Naive thymus-derived CD8-positive, alpha-beta T cell (primary cell): ENCODE measurements at regions of chr5 and their contacts with region 1.

Region 1: GRCh38 chr5:160119142-160119904 is at the start of gene PWWP2A:
- DNase-seq: peak; percentile 91 to 99 (median 98)
- ATAC-seq: peak; percentile 92 to 94
- H3K4me3 Mint-ChIP-seq: peak within 1 kb of the TSS; percentile 86 to 98 (median 96)
- H3K27ac Mint-ChIP-seq: peak within 1 kb of the TSS; percentile 79 to 97 (median 94)
- H3K4me1 Mint-ChIP-seq: peaks cover 5 to 26% (median 14%) of the 10 kb centered on the region in 4 donors
- H3K27me3 Mint-ChIP-seq: peaks cover 0 to 4% (median 3%) of the 10 kb centered on the region in 5 donors
- polyA plus RNA-seq, gene PWWP2A: 21.0 to 30.5 (median 29.8) TPM

Region 2: DNA sequence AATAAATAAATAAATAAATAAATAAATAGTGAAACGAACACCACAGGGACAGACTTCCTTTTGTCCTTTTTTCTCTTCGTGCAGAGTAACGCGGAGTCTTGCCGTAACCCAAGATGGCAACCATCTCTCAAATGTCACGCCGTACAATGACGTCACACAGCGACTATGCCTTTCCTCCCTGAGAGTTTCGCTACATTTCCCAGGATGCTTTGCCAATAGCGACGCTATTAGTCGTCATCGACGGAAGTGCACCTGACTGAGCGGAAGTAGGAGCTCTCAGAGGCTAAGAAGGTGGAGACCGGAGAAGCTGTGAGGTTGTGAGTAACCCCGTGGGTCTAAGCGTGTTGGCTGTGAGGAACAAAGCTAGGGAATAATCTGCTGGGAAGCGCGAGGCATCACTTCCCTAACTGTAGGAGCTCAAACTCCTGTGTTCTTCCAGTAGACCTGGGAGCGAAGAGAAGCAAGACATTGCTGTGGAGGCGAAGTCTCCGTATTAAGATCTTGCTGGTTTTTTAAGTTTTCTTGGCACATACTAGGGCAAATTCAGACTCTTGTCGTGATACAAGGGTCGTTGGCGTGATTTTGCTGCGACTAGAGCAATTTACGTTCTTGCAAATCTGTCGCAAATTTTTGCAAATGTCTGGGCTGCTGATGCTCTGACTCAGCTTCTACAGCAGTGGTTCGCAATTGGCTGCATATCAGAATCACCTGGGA is 110.3 kb before region 1 on chr5 and contains the start of gene TTC1:
- POLR2A ChIA-PET with region 1: interaction called, 11 read pairs
- DNase-seq: peak; percentile 69 to 97 (median 92)
- ATAC-seq: peak; percentile 98
- H3K4me3 Mint-ChIP-seq: peak within 1 kb of the TSS; percentile 91 to 100 (median 94)
- H3K27ac Mint-ChIP-seq: peak within 1 kb of the TSS; percentile 94 to 99 (median 96)
- H3K4me1 Mint-ChIP-seq: peaks cover 18 to 32% (median 32%) of the 10 kb centered on the region in 4 donors
- H3K27me3 Mint-ChIP-seq: no peaks in the 10 kb centered on the region
- polyA plus RNA-seq, gene TTC1: 84.7 to 101 (median 91.7) TPM